ENCODE measurements at regions of chr6 and their contacts with region 1.

Region 1: GRCh38 chr6:27213544-27214125 is 33.9 kb upstream of the PRSS16 start:
- DNase-seq: peak; percentile 55 to 88 (median 66)
- ATAC-seq: peak; percentile 71
- H3K4me3 ChIP-seq: peak overlapping the region; percentile 55
- H3K27ac ChIP-seq: peak overlapping the region; percentile 61
- H3K4me1 ChIP-seq: peaks cover 6 to 16% of the 10 kb centered on the region in 2 experiments; a peak in 4 of 5 replicates
- H3K27me3 ChIP-seq: no peaks in the 10 kb centered on the region
- CTCF ChIP-seq: no peak
- EP300 ChIP-seq: peak; percentile 48; the same call in 1 of the 2 replicates
- POLR2A ChIP-seq: no peak
- RAD21 ChIP-seq: no peak

Region 2: GRCh38 chr6:27188885-27189418 is 24.7 kb before region 1 on chr6:
- CTCF ChIA-PET with region 1: interaction called, 3 read pairs
- POLR2A ChIA-PET with region 1: interaction called, 5 read pairs
- in situ Hi-C with region 1: no loop called
- intact Hi-C with region 1: loop called (anchors 1 kb)
- DNase-seq: peak; percentile 69 to 93 (median 78)
- ATAC-seq: peak; percentile 85
- H3K4me3 ChIP-seq: peak overlapping the region; percentile 56
- H3K27ac ChIP-seq: peak overlapping the region; percentile 80
- H3K4me1 ChIP-seq: peaks cover 8% of the 10 kb centered on the region in 2 experiments; a peak in 4 of 5 replicates
- H3K27me3 ChIP-seq: no peaks in the 10 kb centered on the region
- CTCF ChIP-seq: peak; percentile 78 to 92 (median 85)
- EP300 ChIP-seq: no peak; the same call in 1 of the 2 replicates
- POLR2A ChIP-seq: no peak
- RAD21 ChIP-seq: peak; percentile 93 to 95

Region 3: GRCh38 chr6:27251606-27252251 is 38.1 kb after region 1 on chr6:
- CTCF ChIA-PET with region 1: no interaction called
- POLR2A ChIA-PET with region 1: interaction called, 5 read pairs
- in situ Hi-C with region 1: no loop called
- intact Hi-C with region 1: loop called (anchors 1 kb)
- DNase-seq: peak; percentile 93 to 97 (median 95)
- ATAC-seq: peak; percentile 94
- H3K4me3 ChIP-seq: peak overlapping the region; percentile 89
- H3K27ac ChIP-seq: peak overlapping the region; percentile 81
- H3K4me1 ChIP-seq: peaks cover 25 to 30% of the 10 kb centered on the region in 2 experiments; a peak in 4 of 5 replicates
- H3K27me3 ChIP-seq: no peaks in the 10 kb centered on the region
- CTCF ChIP-seq: peak; percentile 87 to 98 (median 95)
- EP300 ChIP-seq: peak; percentile 3; the same call in 1 of the 2 replicates
- POLR2A ChIP-seq: peak; percentile 80
- RAD21 ChIP-seq: peak; percentile 71 to 79

Region 4: DNA sequence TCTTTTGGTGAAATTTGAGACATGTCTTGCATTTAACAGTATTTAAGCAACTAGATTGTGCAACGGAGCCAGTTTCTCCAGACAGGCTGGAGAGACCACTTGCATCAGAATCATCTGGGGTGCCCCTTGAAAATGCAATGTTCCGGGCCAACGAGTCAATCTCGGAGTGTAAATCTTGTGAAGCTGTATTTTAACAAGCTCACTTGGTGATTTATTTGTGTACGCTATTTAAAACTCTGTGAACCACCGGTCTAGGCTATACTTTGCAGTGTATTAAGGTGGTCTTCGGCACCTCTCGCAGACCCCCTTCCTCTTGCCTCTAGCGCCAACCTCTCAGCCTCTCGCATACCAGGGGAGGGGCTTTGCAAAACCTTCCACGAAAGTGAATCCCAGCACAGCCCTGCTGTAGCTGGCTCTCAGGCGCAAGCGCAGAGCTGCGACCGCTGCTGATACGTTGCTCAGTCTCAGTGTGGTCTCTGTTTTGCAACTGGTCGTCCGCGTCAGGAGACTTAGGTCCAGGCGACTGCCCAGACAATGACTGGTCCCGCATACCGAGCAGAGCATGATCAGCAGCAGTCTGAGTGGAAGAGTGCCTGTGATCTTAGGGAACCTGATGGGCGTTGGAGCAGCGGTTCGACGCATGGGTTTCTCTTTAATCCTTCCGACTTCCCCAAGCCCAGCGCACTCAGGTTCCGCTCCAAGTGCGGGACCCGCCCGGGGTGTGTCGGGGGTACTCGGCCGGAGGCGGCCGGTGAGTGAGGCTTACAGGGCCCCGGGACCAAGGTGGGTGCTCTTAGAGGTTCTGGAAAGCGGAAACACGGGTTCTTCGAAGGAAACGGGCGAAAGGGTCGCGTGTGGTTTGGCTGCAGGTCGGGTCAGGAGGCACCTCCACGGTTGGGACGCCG is 174.9 kb after region 1 on chr6 and contains the start of gene ZNF391:
- CTCF ChIA-PET with region 1: no interaction called
- POLR2A ChIA-PET with region 1: no interaction called
- in situ Hi-C with region 1: no loop called
- intact Hi-C with region 1: loop called (anchors 5 kb)
- DNase-seq: peak; percentile 63 to 91 (median 78)
- ATAC-seq: peak; percentile 96
- H3K4me3 ChIP-seq: peak within 1 kb of the TSS; percentile 63
- H3K27ac ChIP-seq: peak within 1 kb of the TSS; percentile 86
- H3K4me1 ChIP-seq: peaks cover 4 to 9% of the 10 kb centered on the region in 2 experiments; a peak in 4 of 5 replicates
- H3K27me3 ChIP-seq: no peaks in the 10 kb centered on the region
- CTCF ChIP-seq: peak in 1 of 3 experiments; percentile 6; a peak in 1 of 6 replicates
- EP300 ChIP-seq: peak; percentile 63
- POLR2A ChIP-seq: peak; percentile 97
- RAD21 ChIP-seq: peak; percentile 39 to 41
- polyA plus RNA-seq, gene ZNF391: 2.3 to 2.5 TPM

Region 5: DNA sequence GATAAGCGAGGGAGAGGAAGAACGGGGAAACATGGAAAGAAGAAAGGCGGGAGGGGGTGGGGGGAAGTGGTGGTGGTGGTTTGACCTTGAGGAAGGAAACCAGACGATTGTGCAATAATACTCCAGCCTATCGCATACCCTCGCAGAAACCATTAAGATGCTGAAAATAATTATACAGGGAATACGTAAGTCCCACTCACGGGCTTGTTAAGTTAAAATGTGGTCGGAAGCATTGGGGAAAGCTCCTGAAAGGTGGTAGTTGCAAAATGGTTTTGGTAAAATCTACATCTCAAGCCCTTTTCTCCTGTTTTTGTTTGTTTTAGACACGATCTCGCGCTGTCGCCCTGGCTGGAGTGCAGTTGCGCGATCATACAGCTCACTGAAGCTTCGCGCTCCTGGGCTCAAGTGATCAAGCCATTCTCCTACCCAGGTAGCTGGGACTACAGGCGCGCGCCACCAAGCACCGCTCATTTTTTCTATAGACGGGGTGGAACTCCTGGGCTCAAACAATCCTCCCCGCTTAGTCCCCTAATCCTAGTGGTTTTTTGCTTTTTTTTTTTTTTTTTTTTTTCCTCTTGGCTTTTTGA is 388.1 kb after region 1 on chr6:
- CTCF ChIA-PET with region 1: no interaction called
- POLR2A ChIA-PET with region 1: no interaction called
- in situ Hi-C with region 1: no loop called
- intact Hi-C with region 1: loop called (anchors 5 kb)
- DNase-seq: peak; percentile 56 to 84 (median 68)
- ATAC-seq: peak; percentile 80
- H3K4me3 ChIP-seq: peak overlapping the region; percentile 57
- H3K27ac ChIP-seq: peak overlapping the region; percentile 82
- H3K4me1 ChIP-seq: peaks cover 8 to 13% of the 10 kb centered on the region in 2 experiments; a peak in 3 of 5 replicates
- H3K27me3 ChIP-seq: no peaks in the 10 kb centered on the region
- CTCF ChIP-seq: no peak
- EP300 ChIP-seq: no peak
- POLR2A ChIP-seq: peak; percentile 58; the same call in 1 of the 2 replicates
- RAD21 ChIP-seq: no peak